ENCODE measurements at regions of chr12 and their contacts with region 1.

Region 1: DNA sequence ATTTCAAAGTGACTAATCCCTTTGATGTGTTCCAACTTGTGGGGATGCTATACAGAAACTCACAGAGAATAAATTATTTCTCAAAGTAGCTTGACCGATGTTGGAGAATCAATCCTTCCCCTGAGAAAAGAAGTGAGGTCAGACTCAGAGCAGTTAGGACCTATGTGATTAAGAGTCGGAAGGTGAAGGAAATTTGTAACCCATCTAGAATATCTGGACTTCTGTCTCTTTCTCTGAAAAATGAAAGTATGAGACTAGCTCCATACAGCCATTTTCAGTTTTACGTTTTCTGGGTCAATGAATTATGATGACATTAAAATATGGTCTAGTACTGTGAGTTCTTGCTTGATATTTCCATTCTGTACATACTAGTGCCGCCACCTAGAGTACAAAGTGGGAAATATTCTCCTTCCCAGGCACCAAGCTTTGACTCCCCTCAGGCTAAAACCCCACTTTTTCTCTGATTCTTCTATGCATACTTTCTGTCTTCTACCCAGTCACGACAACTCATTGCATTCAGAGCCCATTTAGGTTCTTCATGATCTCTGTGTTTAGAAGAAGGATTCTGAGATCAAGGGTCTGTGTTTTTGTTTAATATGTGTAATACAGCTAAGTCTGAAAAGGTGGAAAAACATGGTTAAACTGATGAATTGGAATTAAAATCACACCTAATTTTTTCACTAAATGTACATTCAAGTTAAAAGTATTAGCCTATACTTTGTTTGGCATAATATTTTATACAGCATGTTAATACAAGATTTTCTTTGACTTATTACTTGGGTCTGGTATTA is 6.9 kb upstream of the NTS start:
- DNase-seq: peak; percentile 48

Region 2: GRCh38 chr12:85575120-85576096 is 291.8 kb before region 1 on chr12:
- CTCF ChIA-PET with region 1: interaction called, 10 read pairs
- POLR2A ChIA-PET with region 1: no interaction called
- DNase-seq: peak; percentile 66

Region 3: GRCh38 chr12:85644508-85644907 is 222.7 kb before region 1 on chr12:
- CTCF ChIA-PET with region 1: no interaction called
- POLR2A ChIA-PET with region 1: no interaction called
- DNase-seq: no peak

Region 4: GRCh38 chr12:85843606-85844285 is 23.4 kb before region 1 on chr12:
- CTCF ChIA-PET with region 1: interaction called, 13 read pairs
- POLR2A ChIA-PET with region 1: no interaction called
- DNase-seq: no peak